ENCODE measurements at regions of chr17 and their contacts with region 1.

Region 1: GRCh38 chr17:76709077-76709950 is 1.5 kb downstream of the MXRA7 start:
- DNase-seq: peak; percentile 78 to 87 (median 82)
- H3K4me3 ChIP-seq: peak overlapping the region; percentile 87
- H3K27ac ChIP-seq: peak overlapping the region; percentile 77 to 93
- H3K4me1 ChIP-seq: peaks cover 18% of the 10 kb centered on the region
- H3K27me3 ChIP-seq: no peaks in the 10 kb centered on the region
- CTCF ChIP-seq: no peak
- EP300 ChIP-seq: peak; percentile 45
- POLR2A ChIP-seq: peak; percentile 36

Region 2: GRCh38 chr17:76529224-76530094 is 179.9 kb before region 1 on chr17:
- intact Hi-C with region 1: loop called in 2 of 4 experiments (anchors 5 to 10 kb)
- DNase-seq: peak; percentile 91 to 95 (median 93)
- H3K4me3 ChIP-seq: peak overlapping the region; percentile 6
- H3K27ac ChIP-seq: peak overlapping the region; percentile 90 to 91
- H3K4me1 ChIP-seq: peaks cover 39% of the 10 kb centered on the region
- H3K27me3 ChIP-seq: no peaks in the 10 kb centered on the region
- CTCF ChIP-seq: peak in 2 of 3 donors; percentile 7 to 25
- EP300 ChIP-seq: no peak
- POLR2A ChIP-seq: peak; percentile 34

Measured in ovary (tissue), 10 donors.